ENCODE measurements at regions of chr6 and their contacts with region 1.

Region 1: GRCh38 chr6:106546691-106547414 is 82.4 kb downstream of the RTN4IP1 start:
- DNase-seq: no peak
- H3K4me3 ChIP-seq: no peak overlapping the region
- H3K4me3 Mint-ChIP-seq: peak overlapping the region in 1 of 8 donors; percentile 20
- H3K27ac ChIP-seq: no peak overlapping the region
- H3K27ac Mint-ChIP-seq: peak overlapping the region; percentile 39 to 87 (median 77)
- H3K4me1 ChIP-seq: peaks cover 18% of the 10 kb centered on the region
- H3K4me1 Mint-ChIP-seq: peaks cover 26 to 41% (median 34%) of the 10 kb centered on the region in 4 donors
- H3K27me3 ChIP-seq: no peaks in the 10 kb centered on the region
- H3K27me3 Mint-ChIP-seq: no peaks in the 10 kb centered on the region

Region 2: GRCh38 chr6:106525111-106525881 is 21.6 kb before region 1 on chr6:
- CTCF ChIA-PET with region 1: interaction called, 3 read pairs
- POLR2A ChIA-PET with region 1: interaction called, 33 read pairs
- intact Hi-C with region 1: no loop called
- DNase-seq: peak in 4 of 5 donors; percentile 49 to 57 (median 53)
- H3K4me3 ChIP-seq: peak overlapping the region; percentile 13 to 58
- H3K4me3 Mint-ChIP-seq: peak overlapping the region; percentile 85 to 97 (median 92)
- H3K27ac ChIP-seq: peak overlapping the region; percentile 79
- H3K27ac Mint-ChIP-seq: peak overlapping the region; percentile 86 to 96 (median 94)
- H3K4me1 ChIP-seq: peaks cover 58% of the 10 kb centered on the region
- H3K4me1 Mint-ChIP-seq: peaks cover 26 to 81% (median 40%) of the 10 kb centered on the region in 4 donors
- H3K27me3 ChIP-seq: no peaks in the 10 kb centered on the region
- H3K27me3 Mint-ChIP-seq: no peaks in the 10 kb centered on the region

Region 3: DNA sequence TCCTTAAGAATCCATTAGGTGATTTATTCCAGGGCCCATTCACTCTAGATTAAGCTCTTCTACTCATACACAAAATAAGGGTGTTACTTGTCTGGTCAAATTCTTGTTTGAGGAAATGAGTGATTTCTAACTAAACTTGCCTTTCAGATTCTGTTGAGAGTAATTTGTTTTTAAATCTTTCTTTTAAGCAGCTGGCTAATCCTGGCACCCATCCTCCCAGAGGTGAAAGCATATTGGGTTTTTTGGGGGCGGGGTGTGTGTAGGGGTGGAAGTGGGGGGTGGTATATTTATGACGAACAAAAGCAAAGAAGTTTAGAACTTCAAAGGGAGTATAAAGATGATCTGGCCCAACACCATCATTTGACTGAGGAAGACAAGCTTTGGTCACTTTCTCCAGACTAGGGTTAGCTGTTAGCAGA is 12.3 kb before region 1 on chr6:
- CTCF ChIA-PET with region 1: interaction called, 4 read pairs
- POLR2A ChIA-PET with region 1: interaction called, 10 read pairs
- intact Hi-C with region 1: no loop called
- DNase-seq: peak in 1 of 5 donors; percentile 35
- H3K4me3 ChIP-seq: no peak overlapping the region
- H3K4me3 Mint-ChIP-seq: peak overlapping the region in 5 of 8 donors; percentile 4 to 70 (median 46)
- H3K27ac ChIP-seq: no peak overlapping the region
- H3K27ac Mint-ChIP-seq: peak overlapping the region; percentile 9 to 86 (median 67)
- H3K4me1 ChIP-seq: peaks cover 79% of the 10 kb centered on the region
- H3K4me1 Mint-ChIP-seq: peaks cover 73 to 87% (median 80%) of the 10 kb centered on the region in 4 donors
- H3K27me3 ChIP-seq: no peaks in the 10 kb centered on the region
- H3K27me3 Mint-ChIP-seq: no peaks in the 10 kb centered on the region

Region 4: DNA sequence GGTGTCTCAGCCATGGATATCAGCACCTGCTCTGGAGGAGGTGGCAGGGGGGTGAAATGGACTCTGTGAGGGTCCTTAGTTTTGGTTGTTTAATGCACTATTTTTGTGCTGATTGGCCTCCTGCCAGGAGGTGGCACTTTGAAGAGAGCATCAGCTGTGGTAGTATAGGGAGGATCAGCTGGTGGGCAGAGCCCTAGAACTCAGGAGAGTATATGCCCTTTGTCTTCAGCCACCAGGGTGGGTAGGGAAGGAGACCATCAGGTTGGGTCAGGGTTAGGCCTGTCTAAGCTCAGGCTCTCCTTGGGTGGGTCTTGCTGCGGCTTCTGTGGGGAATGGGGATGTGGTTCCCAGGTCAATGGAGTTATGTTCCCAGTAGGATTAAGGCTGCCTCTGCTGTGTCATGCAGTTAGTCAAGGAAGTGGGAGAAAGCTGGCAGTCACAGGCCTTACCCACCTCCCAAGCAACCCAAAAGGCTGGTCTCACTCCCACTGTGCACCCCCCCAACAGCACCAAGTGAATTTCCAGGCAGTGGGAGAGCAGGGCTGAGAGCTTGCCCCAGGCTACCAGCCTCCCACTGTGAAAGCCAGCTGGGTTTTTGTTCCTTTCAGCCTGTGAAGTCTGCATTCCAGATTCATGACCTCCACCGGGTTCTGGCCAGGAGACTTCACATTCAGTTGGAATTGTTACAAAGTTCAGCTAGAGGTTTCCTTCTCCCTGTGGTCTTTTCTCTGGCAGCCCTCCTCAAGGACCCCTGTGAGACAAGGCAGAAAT is 1533.3 kb after region 1 on chr6:
- CTCF ChIA-PET with region 1: no interaction called
- POLR2A ChIA-PET with region 1: no interaction called
- intact Hi-C with region 1: no loop called
- DNase-seq: no peak
- H3K4me3 ChIP-seq: no peak overlapping the region
- H3K4me3 Mint-ChIP-seq: no peak overlapping the region
- H3K27ac ChIP-seq: no peak overlapping the region
- H3K27ac Mint-ChIP-seq: peak overlapping the region in 1 of 7 donors; percentile 48
- H3K4me1 ChIP-seq: peaks cover 3% of the 10 kb centered on the region
- H3K4me1 Mint-ChIP-seq: peaks cover 0 to 8% (median 1%) of the 10 kb centered on the region in 4 donors
- H3K27me3 ChIP-seq: no peaks in the 10 kb centered on the region
- H3K27me3 Mint-ChIP-seq: peaks cover 6 to 17% of the 10 kb centered on the region in 2 donors

Measured in CD4-positive, alpha-beta memory T cell (primary cell).